ENCODE measurements at regions of chr14 and their contacts with region 1.

Region 1: GRCh38 chr14:28751467-28752058 is 15.0 kb upstream of the FOXG1 start:
- DNase-seq: peak; percentile 45
- H3K4me3 ChIP-seq: no peak overlapping the region
- H3K27ac ChIP-seq: no peak overlapping the region
- H3K4me1 ChIP-seq: no peaks in the 10 kb centered on the region
- H3K27me3 ChIP-seq: peaks cover 20% of the 10 kb centered on the region
- CTCF ChIP-seq: peak; percentile 79 to 84

Region 2: DNA sequence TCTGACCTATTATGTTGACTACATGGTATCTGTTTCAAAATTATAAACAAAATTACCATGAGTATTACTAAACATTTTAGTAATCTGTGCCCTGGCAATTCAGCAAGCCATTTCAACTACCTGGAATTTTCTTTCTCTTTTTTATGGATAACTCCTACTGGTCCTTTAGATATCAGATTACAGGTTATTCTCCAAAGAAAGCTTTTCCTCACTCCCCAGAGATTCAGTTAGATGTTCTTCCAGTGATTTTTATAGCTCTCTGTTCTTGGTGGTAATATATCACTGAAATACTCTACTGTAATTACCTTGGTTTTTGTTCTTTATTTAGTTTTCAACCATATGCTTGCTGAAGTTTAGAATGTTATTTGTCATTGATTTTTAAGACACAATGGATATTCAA is 915.2 kb before region 1 on chr14:
- CTCF ChIA-PET with region 1: no interaction called
- dilution Hi-C with region 1: no loop called
- in situ Hi-C with region 1: no loop called
- intact Hi-C with region 1: no loop called
- DNase-seq: no peak
- H3K4me3 ChIP-seq: no peak overlapping the region
- H3K27ac ChIP-seq: no peak overlapping the region
- H3K4me1 ChIP-seq: no peaks in the 10 kb centered on the region
- H3K27me3 ChIP-seq: no peaks in the 10 kb centered on the region
- CTCF ChIP-seq: no peak

Region 3: GRCh38 chr14:29521526-29522137 is 770.1 kb after region 1 on chr14:
- CTCF ChIA-PET with region 1: interaction called, 9 read pairs
- dilution Hi-C with region 1: no loop called
- in situ Hi-C with region 1: loop called in 1 of 2 experiments (anchors 25 kb)
- intact Hi-C with region 1: loop called (anchors 1 kb)
- DNase-seq: no peak
- H3K4me3 ChIP-seq: no peak overlapping the region
- H3K27ac ChIP-seq: no peak overlapping the region
- H3K4me1 ChIP-seq: no peaks in the 10 kb centered on the region
- H3K27me3 ChIP-seq: no peaks in the 10 kb centered on the region
- CTCF ChIP-seq: peak in 1 of 2 donors; percentile 13

Region 4: GRCh38 chr14:29536886-29537511 is 785.4 kb after region 1 on chr14:
- CTCF ChIA-PET with region 1: no interaction called
- dilution Hi-C with region 1: no loop called
- in situ Hi-C with region 1: loop called (anchors 10 to 25 kb)
- intact Hi-C with region 1: loop called (anchors 1 kb)
- DNase-seq: no peak
- H3K4me3 ChIP-seq: no peak overlapping the region
- H3K27ac ChIP-seq: no peak overlapping the region
- H3K4me1 ChIP-seq: no peaks in the 10 kb centered on the region
- H3K27me3 ChIP-seq: no peaks in the 10 kb centered on the region
- CTCF ChIP-seq: peak in 1 of 2 donors; percentile 46

Region 5: DNA sequence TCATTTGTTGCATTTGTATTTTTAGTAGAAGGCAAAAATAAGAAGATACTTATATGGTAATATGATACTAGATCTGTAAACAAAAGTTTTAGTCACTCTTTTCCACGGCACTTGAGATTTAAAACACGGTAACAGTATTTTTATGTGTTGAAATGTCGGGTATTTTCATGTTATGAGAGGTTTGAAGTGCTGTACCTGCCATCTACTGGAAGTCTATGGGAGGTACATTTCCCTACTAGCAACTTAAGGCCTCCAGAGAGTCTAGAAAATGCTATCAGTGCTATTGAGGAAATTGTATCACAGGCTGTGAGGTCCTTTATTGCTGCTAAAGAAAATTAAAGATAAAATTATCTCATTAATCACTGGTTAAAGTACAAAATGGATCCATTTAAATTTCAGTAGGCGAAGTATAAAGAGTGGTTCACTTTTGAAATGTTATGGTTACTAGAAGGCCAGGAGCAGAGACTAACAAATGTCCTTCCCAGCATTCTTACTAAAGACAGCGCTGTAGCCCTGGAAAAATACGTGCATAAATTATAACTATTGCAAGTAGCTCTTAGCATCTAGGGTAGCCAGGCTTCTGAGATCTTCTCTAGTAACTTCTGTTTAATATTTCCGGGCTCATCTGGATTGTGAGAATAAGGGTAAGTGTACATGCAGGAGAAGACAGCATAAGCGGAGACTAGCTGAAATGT is 1253.7 kb after region 1 on chr14:
- CTCF ChIA-PET with region 1: no interaction called
- dilution Hi-C with region 1: no loop called
- in situ Hi-C with region 1: no loop called
- intact Hi-C with region 1: loop called (anchors 2 kb)
- DNase-seq: peak; percentile 21
- H3K4me3 ChIP-seq: no peak overlapping the region
- H3K27ac ChIP-seq: no peak overlapping the region
- H3K4me1 ChIP-seq: no peaks in the 10 kb centered on the region
- H3K27me3 ChIP-seq: no peaks in the 10 kb centered on the region
- CTCF ChIP-seq: peak; percentile 37 to 57

Region 6: GRCh38 chr14:30214461-30215090 is 1463.0 kb after region 1 on chr14:
- CTCF ChIA-PET with region 1: no interaction called
- dilution Hi-C with region 1: no loop called
- in situ Hi-C with region 1: loop called (anchors 25 kb)
- intact Hi-C with region 1: loop called (anchors 1 kb)
- DNase-seq: peak; percentile 55
- H3K4me3 ChIP-seq: no peak overlapping the region
- H3K27ac ChIP-seq: no peak overlapping the region
- H3K4me1 ChIP-seq: peaks cover 5% of the 10 kb centered on the region
- H3K27me3 ChIP-seq: no peaks in the 10 kb centered on the region
- CTCF ChIP-seq: peak; percentile 68 to 70

Region 7: GRCh38 chr14:30443368-30444007 is 1691.9 kb after region 1 on chr14:
- CTCF ChIA-PET with region 1: no interaction called
- dilution Hi-C with region 1: no loop called
- in situ Hi-C with region 1: no loop called
- intact Hi-C with region 1: loop called (anchors 10 kb)
- DNase-seq: peak; percentile 12
- H3K4me3 ChIP-seq: no peak overlapping the region
- H3K27ac ChIP-seq: no peak overlapping the region
- H3K4me1 ChIP-seq: no peaks in the 10 kb centered on the region
- H3K27me3 ChIP-seq: peaks cover 2% of the 10 kb centered on the region
- CTCF ChIP-seq: peak; percentile 43 to 62